Right lobe of liver (tissue), 6 donors: ENCODE measurements at regions of chr2 and their contacts with region 1.

Region 1: DNA sequence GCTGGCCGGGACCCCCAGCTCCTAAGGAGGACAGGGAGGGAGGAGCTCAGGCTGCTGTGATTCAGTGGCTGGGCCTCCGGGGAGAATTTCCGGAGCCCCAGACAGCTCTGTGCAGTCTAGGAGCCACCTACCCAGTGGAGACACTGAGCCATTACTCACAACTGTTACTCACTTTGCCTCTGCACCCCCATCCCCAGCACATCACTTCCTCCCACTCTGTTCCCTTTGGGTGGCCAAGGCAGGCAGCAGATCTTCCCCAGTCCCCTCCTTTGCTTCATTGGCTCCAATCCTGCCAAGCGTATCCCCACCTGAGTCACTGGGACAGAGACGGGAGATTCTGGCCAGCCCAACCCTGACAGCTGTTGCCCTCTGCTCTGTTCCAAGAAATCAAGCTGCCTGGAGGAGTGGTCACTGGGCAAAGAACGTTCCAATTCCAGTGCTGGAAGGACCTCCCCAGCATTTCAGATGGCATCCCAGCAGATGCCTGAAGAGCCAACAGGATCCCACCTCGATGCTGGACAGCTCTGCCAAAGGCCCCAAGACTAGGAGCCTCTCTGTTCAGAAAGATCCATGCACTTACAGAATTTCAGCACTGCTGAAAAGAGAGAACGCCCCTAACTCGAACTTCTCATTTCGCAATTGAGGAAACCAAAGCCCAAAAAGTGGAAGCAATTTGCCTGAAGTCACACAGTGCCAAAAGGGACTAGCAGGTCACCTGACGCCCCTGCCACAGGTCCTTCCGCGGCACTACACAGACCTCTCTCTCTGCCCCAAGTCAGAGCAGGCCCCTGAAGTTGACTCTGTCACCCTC is 68.3 kb downstream of the TNS1 start:
- DNase-seq: peak in 2 of 3 donors; percentile 64 to 73
- ATAC-seq: peak; percentile 23 to 48 (median 33)
- H3K4me3 ChIP-seq: peak overlapping the region; percentile 9 to 36 (median 16)
- H3K27ac ChIP-seq: peak overlapping the region; percentile 64 to 97 (median 89)
- H3K4me1 ChIP-seq: peaks cover 0 to 97% (median 46%) of the 10 kb centered on the region in 4 donors
- H3K27me3 ChIP-seq: no peaks in the 10 kb centered on the region
- CTCF ChIP-seq: no peak
- POLR2A ChIP-seq: no peak

Region 2: DNA sequence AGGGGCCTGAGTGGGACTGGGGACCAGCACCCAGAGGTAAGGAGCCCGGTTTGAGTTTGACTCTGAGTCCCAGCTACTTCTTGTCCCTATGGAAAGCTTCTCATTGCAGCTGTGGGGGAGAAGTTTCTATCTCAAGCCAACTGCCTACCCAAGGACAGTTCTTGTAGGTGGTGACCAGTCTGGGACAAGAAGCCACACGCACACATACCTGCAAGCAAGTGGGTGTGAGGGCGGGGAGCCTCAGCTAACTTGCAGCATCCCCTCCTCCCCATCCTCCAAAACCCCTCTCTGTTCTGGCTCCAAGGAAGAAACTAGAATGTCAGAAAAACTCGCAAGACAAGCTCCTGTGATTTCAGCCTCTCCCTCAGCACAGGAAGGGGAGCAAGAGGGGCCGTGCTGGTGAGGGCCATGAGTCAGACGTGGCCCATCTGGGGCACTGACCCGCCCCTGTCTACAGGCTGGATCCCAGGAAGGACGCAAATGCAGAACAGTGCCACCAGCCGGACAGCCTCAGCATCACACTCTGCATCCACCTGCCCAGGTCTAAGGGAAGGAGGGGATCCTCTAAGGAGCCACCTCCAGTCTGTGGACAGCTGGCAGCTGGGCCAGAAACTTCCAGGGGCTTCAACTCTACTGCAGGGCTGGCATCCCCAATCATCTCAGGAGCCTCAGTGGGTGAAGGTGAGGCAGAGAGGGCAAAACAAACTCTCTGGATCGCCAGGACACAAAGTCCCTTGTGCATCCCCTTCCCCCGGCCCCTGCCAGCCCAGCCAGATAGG is 35.1 kb before region 1 on chr2:
- intact Hi-C with region 1: loop called in 1 of 2 experiments (anchors 5 kb)
- DNase-seq: peak in 2 of 3 donors; percentile 71 to 80
- ATAC-seq: peak; percentile 5 to 30 (median 14)
- H3K4me3 ChIP-seq: no peak overlapping the region
- H3K27ac ChIP-seq: peak overlapping the region; percentile 70 to 87 (median 81)
- H3K4me1 ChIP-seq: peaks cover 0 to 81% (median 50%) of the 10 kb centered on the region in 4 donors
- H3K27me3 ChIP-seq: no peaks in the 10 kb centered on the region
- CTCF ChIP-seq: peak; percentile 55 to 74 (median 58)
- POLR2A ChIP-seq: no peak